Activated CD4-positive, alpha-beta T cell treated with anti-CD3 and anti-CD28 coated beads, Interleukin-2, amount 10 ng/mL, durations not matched to agents 24 days and 14 days (primary cell): ENCODE measurements at regions of chr1 and their contacts with region 1.

Region 1: DNA sequence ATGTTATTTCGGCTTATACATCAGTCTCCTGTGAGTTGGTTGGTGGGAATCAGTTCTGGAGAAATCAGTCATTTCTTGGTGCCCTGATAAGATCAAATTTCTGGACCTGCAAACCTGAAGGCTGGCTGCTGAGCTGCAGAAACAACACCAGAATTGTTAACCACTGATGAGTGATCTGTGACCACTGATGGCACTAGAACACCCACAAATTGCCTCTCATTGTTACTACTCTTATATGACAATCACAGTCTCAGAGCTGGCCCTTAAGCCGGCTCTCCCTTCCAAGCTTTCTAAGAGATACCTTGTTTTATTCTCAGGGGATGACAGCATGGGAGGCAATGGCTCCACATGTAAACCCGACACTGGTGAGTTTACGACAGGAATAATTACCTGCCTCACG is 1.9 kb downstream of the C1orf162 start:
- DNase-seq: peak; percentile 71
- H3K4me3 Mint-ChIP-seq: peak overlapping the region; percentile 61
- H3K27ac Mint-ChIP-seq: peak overlapping the region; percentile 75
- H3K4me1 Mint-ChIP-seq: peaks cover 48% of the 10 kb centered on the region
- H3K27me3 Mint-ChIP-seq: peaks cover 6% of the 10 kb centered on the region

Region 2: GRCh38 chr1:111448918-111449702 is 26.6 kb before region 1 on chr1 and contains the starts of genes ATP5PB and WDR77:
- intact Hi-C with region 1: loop called (anchors 1 kb)
- DNase-seq: peak; percentile 98
- H3K4me3 Mint-ChIP-seq: peak within 1 kb of the TSS; percentile 100
- H3K27ac Mint-ChIP-seq: peak within 1 kb of the TSS; percentile 98
- H3K4me1 Mint-ChIP-seq: peaks cover 68% of the 10 kb centered on the region
- H3K27me3 Mint-ChIP-seq: no peaks in the 10 kb centered on the region
- total RNA-seq, gene ATP5PB: 308 and 325 TPM in 2 replicates
- total RNA-seq, gene WDR77: 60.9 and 65.0 TPM in 2 replicates